ENCODE measurements at regions of chr6 and their contacts with region 1.

Region 1: DNA sequence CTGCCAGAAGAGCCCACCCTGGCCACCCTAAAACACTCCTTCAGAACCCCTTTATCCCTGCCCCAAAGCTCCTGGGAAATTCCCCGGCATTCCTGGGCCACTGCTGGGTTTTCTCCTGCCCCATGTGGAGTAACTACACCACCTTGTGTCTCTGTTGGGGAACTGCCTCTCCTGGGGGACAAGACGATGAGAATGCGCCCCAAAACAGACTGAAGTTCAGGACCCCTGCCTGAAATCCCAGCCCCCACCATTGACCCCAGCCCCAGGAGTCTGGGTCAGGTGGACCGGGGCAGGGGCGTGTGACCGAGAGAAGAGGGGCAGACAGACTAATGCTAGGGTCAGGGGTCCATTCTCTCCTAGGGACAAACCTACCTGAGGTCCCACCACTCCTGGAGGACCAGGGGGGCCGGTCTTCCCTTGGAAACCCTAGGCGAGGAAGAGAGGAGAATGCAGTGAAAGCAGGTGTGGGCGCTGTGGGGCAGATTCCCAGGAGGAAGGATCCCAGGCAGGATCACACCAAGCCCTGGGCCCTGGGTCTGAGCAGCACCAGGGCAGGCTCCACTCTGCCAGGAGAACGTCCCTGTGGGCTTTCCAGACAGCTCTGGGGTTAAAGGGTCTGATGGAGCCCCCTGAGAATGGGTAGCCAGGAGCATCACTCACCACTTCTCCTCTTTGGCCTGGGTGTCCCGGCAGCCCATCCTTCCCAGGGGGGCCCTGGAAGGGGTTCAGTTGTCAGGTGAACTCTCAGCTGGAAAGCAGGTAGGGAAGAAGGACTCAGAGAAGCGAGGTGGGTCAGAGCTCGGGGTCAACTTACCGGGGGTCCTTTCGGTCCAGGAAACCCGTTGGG is 19.4 kb downstream of the COL11A2 start:
- DNase-seq: peak; percentile 36 to 69
- ATAC-seq: peak; percentile 66 to 78; a peak in 5 of 6 replicates
- H3K4me3 ChIP-seq: no peak overlapping the region
- H3K27ac ChIP-seq: peak overlapping the region in 1 of 2 experiments; percentile 64; a peak in 1 of 6 replicates
- H3K4me1 ChIP-seq: no peaks in the 10 kb centered on the region
- CTCF ChIP-seq: peak; percentile 45
- EP300 ChIP-seq: no peak
- POLR2A ChIP-seq: no peak
- RAD21 ChIP-seq: peak; percentile 66 to 75

Region 2: GRCh38 chr6:33014841-33015634 is 157.9 kb before region 1 on chr6:
- CTCF ChIA-PET with region 1: interaction called, 11 read pairs
- POLR2A ChIA-PET with region 1: no interaction called
- DNase-seq: peak; percentile 47 to 75
- ATAC-seq: peak; percentile 61 to 85; a peak in 5 of 6 replicates
- H3K4me3 ChIP-seq: no peak overlapping the region
- H3K27ac ChIP-seq: no peak overlapping the region
- H3K4me1 ChIP-seq: no peaks in the 10 kb centered on the region
- CTCF ChIP-seq: peak; percentile 59
- EP300 ChIP-seq: no peak
- POLR2A ChIP-seq: no peak
- RAD21 ChIP-seq: peak; percentile 57 to 62

Region 3: DNA sequence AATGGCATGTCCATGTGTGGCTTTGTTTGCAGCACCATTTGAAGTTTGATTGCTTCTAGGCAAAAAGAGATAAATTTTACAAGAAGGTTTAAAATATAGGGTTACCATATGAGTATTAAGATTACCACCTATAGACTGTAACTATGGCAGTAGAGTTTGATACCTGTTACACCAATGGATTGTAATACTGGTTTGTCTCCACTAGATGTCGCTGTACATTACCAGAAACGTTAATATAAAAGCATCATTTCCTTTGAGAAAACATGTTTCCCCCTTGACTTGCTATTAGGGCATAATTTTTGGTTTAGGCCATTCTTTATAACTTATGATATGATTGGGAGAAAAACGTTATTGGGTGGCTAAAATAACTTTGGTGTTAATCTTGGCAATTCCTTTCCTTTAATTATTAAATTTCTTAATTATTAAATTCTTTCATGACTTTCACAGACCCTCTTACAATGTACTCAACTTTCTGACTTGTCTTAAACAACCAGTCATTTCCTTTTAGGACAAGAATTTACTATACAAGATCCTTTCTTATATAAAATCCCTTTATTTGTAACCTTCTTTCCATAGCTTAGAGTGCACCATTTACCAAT is 54.3 kb before region 1 on chr6:
- CTCF ChIA-PET with region 1: interaction called, 12 read pairs
- POLR2A ChIA-PET with region 1: no interaction called
- DNase-seq: peak in 1 of 2 experiments; percentile 46
- ATAC-seq: peak in 1 of 2 experiments; percentile 47; a peak in 2 of 6 replicates
- H3K4me3 ChIP-seq: no peak overlapping the region
- H3K27ac ChIP-seq: no peak overlapping the region
- H3K4me1 ChIP-seq: no peaks in the 10 kb centered on the region
- CTCF ChIP-seq: peak; percentile 61
- EP300 ChIP-seq: no peak
- POLR2A ChIP-seq: no peak
- RAD21 ChIP-seq: peak; percentile 40 to 46; a peak in 3 of 5 replicates

Region 4: GRCh38 chr6:33161354-33162331 is 11.3 kb before region 1 on chr6:
- CTCF ChIA-PET with region 1: interaction called, 27 read pairs
- POLR2A ChIA-PET with region 1: no interaction called
- DNase-seq: peak; percentile 37 to 74
- ATAC-seq: peak; percentile 87 to 94
- H3K4me3 ChIP-seq: peak overlapping the region; percentile 49
- H3K27ac ChIP-seq: peak overlapping the region; percentile 78 to 91
- H3K4me1 ChIP-seq: peaks cover 14% of the 10 kb centered on the region; the same call in 2 of the 3 replicates
- CTCF ChIP-seq: peak; percentile 72
- EP300 ChIP-seq: no peak
- POLR2A ChIP-seq: no peak
- RAD21 ChIP-seq: peak; percentile 35 to 55; a peak in 3 of 5 replicates

Region 5: GRCh38 chr6:33197431-33198048 is 24.6 kb after region 1 on chr6:
- CTCF ChIA-PET with region 1: interaction called, 10 read pairs
- POLR2A ChIA-PET with region 1: interaction called, 4 read pairs
- DNase-seq: peak; percentile 67 to 68
- ATAC-seq: peak; percentile 67 to 82; a peak in 5 of 6 replicates
- H3K4me3 ChIP-seq: no peak overlapping the region
- H3K27ac ChIP-seq: no peak overlapping the region
- H3K4me1 ChIP-seq: peaks cover 20% of the 10 kb centered on the region; the same call in 2 of the 3 replicates
- CTCF ChIP-seq: peak; percentile 55
- EP300 ChIP-seq: no peak
- POLR2A ChIP-seq: no peak
- RAD21 ChIP-seq: peak in 1 of 2 experiments; percentile 46; a peak in 2 of 5 replicates

Measured in A549 (cell line).